ENCODE measurements at regions of chr1 and their contacts with region 1.

Region 1: DNA sequence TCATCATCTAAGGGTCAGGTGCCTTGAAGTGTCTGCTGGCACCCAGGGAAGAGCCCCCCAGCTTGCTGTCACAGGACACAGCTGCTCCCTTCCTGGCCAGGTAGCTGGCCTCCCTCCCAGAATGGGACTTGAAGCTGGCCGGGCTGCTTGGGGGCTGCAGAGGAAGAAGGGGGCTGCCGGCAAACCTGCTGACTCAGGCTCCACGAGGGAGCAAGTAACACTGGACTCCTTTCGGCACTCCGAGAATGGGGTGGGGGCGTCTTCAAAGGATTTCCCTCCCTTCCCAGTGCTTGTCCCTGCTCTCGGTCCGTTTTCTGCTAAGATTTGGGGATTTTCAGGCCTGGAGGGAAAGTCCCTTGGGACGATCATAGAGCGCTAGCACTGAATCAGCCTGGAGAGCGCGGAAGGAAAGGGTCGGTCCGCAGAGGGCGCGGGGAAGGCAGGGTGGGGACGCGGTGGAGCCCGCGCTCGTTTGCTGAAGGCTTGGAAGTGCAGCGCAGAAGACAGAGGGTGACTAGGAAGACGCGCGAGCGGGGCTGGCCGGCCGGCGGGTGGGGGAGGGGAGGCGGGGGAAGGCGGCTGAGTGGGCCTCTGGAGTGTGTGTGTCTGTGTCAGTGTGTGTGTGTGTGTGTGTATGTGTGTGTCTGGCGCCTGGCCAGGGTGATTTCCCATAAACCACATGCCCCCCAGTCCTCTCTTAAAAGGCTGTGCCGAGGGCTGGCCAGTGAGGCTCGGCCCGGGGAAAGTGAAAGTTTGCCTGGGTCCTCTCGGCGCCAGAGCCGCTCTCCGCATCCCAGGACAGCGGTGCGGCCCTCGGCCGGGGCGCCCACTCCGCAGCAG is at the start of gene CSF1:
- DNase-seq: peak; percentile 65
- H3K4me3 Mint-ChIP-seq: peak within 1 kb of the TSS; percentile 92
- H3K27ac Mint-ChIP-seq: peak within 1 kb of the TSS; percentile 96
- H3K4me1 Mint-ChIP-seq: peaks cover 75% of the 10 kb centered on the region
- H3K27me3 Mint-ChIP-seq: no peaks in the 10 kb centered on the region
- total RNA-seq, gene CSF1: 251 and 252 TPM in 2 replicates

Region 2: GRCh38 chr1:109790735-109791494 is 119.4 kb before region 1 on chr1:
- intact Hi-C with region 1: loop called (anchors 1 kb)
- DNase-seq: peak; percentile 80
- H3K4me3 Mint-ChIP-seq: peak overlapping the region; percentile 45
- H3K27ac Mint-ChIP-seq: peak overlapping the region; percentile 97
- H3K4me1 Mint-ChIP-seq: peaks cover 75% of the 10 kb centered on the region
- H3K27me3 Mint-ChIP-seq: no peaks in the 10 kb centered on the region

Region 3: DNA sequence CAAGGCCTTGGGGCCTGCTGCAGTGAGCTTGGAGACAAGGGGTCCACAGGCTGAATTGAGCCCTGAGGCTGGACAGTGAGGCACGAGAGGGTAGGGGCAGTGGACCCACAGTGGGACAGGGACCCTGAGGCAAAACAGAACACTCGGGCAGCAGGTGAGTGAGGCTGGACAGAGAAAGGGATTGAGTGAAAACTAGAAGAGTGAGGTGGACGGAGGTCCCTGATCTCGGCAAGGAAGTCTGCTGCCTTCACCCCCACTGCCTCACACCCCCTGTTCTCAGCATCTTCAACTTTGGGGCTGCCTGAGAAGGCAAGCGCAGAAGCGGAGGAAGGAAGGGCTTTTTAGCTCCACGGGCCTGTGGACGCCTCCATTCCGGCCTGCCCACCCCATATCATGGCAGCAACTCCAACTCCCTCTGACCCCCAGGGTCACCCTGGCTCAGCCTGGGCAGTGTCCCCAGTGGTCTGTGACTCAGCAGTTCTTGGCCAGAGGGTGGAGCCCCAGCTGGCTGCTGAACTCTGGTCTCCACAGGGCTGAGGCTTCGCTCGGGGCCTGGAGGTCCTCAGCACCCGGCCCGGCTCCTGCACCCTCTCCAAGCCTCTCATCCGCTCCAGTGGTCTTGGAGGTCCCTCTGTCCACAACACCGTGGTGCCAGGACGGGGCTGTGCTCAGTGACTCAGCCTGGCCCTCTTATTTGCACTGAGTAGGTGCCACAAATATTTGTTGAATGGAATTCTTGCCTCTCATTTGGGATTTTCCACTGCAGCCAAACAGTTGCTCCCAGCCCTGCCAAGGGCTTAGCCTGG is 86.6 kb before region 1 on chr1:
- intact Hi-C with region 1: loop called (anchors 1 kb)
- DNase-seq: no peak
- H3K4me3 Mint-ChIP-seq: no peak overlapping the region
- H3K27ac Mint-ChIP-seq: peak overlapping the region; percentile 84
- H3K4me1 Mint-ChIP-seq: peaks cover 67% of the 10 kb centered on the region
- H3K27me3 Mint-ChIP-seq: no peaks in the 10 kb centered on the region

Region 4: GRCh38 chr1:109895720-109896504 is 14.4 kb before region 1 on chr1:
- intact Hi-C with region 1: loop called (anchors 1 kb)
- DNase-seq: no peak
- H3K4me3 Mint-ChIP-seq: no peak overlapping the region
- H3K27ac Mint-ChIP-seq: no peak overlapping the region
- H3K4me1 Mint-ChIP-seq: peaks cover 21% of the 10 kb centered on the region
- H3K27me3 Mint-ChIP-seq: no peaks in the 10 kb centered on the region